Mucosa of descending colon (tissue), 3 donors: ENCODE measurements at regions of chr17 and their contacts with region 1.

Region 1: DNA sequence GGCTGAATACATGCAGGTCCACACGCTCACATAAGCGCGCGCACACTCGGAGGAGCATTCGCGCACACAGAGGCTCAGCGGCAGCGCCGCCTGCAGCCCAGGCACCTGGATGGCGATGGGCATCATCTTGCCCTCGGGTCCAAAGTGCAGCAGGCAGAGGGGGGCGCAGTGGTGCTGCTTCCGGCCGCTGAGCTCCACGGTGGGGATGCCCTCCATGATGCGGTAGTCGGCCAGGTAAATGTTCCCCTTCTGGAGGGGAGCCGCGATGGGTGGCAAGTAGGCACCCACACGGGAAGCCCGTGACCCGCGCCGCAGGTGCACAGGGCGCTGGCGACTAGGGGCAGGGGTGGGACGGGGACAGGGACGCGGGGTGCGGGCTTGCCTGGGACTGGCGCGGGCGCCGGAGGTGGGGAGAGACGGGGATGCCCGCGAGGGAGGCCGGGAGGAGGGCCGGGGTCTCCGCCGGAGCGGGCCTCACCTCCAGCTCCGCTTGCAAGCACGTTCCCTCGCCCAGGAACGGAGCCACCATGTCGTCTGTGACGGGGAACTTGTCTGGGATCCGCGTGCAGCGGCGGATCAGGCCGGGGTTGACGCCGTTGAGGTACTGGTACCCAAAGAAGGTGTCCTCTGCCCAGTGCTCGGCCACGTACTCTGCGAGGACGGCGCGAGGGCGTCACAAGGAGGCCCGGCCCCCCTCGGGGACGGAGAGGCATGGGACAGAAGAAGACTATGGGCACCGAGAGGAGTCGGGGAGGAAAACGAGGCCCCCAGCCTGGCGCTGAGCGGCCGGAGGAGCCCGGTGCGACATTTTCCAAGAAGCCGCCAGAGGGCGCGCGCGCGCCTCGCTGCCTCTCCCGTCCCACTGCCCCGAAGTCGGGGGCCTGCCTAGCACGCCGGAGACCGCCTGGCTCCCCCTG is 8.0 kb downstream of the ALOX12B start:
- DNase-seq: peak; percentile 79 to 84 (median 81)
- ATAC-seq: peak; percentile 89
- H3K4me3 ChIP-seq: no peak overlapping the region
- H3K4me1 ChIP-seq: peaks cover 8% of the 10 kb centered on the region
- CTCF ChIP-seq: peak; percentile 86

Region 2: DNA sequence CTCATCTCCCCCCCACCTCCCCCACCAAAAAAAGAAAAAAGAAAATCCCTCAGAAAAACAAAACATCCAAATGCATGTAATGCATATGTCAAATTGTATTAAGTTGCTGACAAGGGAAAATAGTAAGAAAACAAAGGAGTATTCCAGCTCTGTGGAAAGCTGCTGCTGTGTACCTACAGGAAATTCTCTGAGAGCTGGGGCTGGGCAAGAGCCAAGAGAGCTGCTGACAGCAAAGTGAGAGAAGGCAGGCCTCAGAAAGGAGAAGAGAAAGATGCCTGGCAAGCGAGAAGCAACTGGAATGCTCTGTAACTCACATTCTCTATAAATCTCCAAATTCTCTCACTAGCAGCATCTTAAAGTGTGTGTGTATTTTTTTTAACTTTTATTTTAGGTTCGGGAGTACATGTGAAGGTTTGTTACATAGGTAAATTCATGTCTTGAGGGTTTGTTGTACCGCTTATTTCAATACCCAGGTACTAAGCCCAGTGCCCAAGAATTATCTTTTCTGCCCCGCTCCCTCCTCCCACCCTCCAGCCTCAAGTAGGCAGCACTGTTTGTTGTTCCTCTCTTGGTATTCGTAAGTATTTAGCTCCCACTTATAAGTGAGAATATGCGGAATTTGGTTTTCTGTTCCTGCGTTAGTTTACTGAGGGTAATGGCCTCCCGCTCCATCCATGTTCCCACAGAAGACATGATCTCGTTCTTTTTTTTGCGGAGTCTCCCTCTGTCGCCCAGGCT is 123.2 kb before region 1 on chr17:
- intact Hi-C with region 1: no loop called
- DNase-seq: peak in 1 of 3 donors; percentile 13
- ATAC-seq: no peak
- H3K4me3 ChIP-seq: no peak overlapping the region
- H3K4me1 ChIP-seq: no peaks in the 10 kb centered on the region
- CTCF ChIP-seq: no peak

Region 3: DNA sequence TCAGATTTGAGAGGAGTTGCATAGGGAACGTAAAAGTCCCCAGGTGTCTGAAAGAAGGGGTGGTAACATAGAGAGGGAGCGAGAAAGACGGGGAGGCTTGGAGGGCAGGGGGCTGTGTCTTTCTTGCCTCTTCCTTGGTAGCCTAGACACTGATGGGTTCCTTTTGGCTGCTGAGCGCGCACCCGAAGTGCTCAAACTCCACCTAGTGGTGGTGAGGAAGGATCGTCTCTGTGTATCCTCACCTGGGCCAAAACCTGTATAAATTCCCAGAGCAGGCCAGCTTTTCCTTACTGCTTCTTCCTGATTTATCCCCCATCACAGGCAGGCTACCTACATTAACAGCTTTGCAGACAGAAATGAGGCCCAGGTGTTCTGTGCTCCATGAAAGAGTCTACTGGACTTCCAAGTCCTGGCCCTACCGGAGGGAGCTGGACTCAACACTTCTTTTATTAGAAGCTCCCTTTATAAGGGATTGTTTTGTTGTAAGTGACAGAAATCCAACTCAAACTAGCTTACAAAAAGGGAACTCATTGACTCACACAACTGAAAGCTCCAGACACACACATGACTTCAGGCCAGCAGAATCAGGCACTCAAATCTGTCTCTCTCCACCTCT is 221.2 kb after region 1 on chr17:
- intact Hi-C with region 1: loop called in 1 of 2 experiments (anchors 10 kb)
- DNase-seq: peak; percentile 58 to 69 (median 65)
- ATAC-seq: peak; percentile 98
- H3K4me3 ChIP-seq: no peak overlapping the region
- H3K4me1 ChIP-seq: peaks cover 5% of the 10 kb centered on the region
- CTCF ChIP-seq: peak; percentile 62